ENCODE measurements at regions of chr16 and their contacts with region 1.

Region 1: DNA sequence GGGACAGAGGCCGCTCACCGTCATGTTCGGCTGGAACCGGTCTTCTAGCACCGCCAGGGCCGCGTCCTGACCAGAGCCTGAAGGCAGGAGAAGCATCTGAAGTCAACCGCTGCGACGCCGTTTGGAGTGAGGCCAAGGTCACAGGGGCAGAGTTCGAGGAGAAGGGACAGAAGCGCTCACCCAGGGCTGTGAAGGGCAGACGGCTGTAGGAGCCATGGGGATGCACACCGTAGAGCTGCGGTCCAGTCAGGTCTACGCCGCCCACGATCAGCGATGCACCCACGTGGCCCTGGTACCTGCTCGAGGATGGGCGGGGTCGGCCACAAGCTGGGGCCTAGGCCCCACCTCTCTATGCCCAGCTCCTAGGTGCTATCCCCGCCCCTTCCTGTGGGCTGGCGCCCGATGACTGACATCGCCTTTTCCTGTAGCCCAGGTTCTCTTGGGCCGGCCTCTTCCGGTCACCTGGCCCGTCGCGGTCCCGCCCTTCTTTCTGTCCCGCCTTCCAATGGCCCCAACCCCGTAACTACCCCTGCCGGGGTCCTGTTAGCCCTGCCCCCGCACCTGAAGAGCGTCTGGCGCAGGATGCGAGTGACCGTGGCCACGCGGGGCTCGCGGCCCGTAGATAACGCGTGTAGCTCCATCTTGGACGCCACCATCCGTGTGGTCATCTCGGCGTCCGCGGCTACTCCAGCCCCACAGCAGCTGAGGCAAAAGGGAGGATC is 1.1 kb downstream of the PSMB10 start:
- DNase-seq: peak; percentile 86 to 99 (median 94)
- ATAC-seq: peak; percentile 91
- H3K4me3 ChIP-seq: peak overlapping the region; percentile 96
- H3K4me3 Mint-ChIP-seq: peak overlapping the region; percentile 98
- H3K27ac ChIP-seq: peak overlapping the region; percentile 84 to 89
- H3K27ac Mint-ChIP-seq: peak overlapping the region; percentile 95
- H3K4me1 ChIP-seq: peaks cover 48% of the 10 kb centered on the region
- H3K4me1 Mint-ChIP-seq: peaks cover 38% of the 10 kb centered on the region
- H3K27me3 ChIP-seq: no peaks in the 10 kb centered on the region
- H3K27me3 Mint-ChIP-seq: no peaks in the 10 kb centered on the region
- CTCF ChIP-seq: no peak

Region 2: GRCh38 chr16:67480833-67481560 is 454.6 kb before region 1 on chr16 and contains the start of gene ATP6V0D1:
- CTCF ChIA-PET with region 1: no interaction called
- POLR2A ChIA-PET with region 1: interaction called, 10 read pairs
- intact Hi-C with region 1: no loop called
- DNase-seq: peak; percentile 96 to 100 (median 99)
- ATAC-seq: peak; percentile 87
- H3K4me3 ChIP-seq: peak within 1 kb of the TSS; percentile 100
- H3K4me3 Mint-ChIP-seq: peak within 1 kb of the TSS; percentile 98
- H3K27ac ChIP-seq: peak within 1 kb of the TSS; percentile 98 to 100
- H3K27ac Mint-ChIP-seq: peak within 1 kb of the TSS; percentile 95
- H3K4me1 ChIP-seq: peaks cover 53% of the 10 kb centered on the region
- H3K4me1 Mint-ChIP-seq: peaks cover 54% of the 10 kb centered on the region
- H3K27me3 ChIP-seq: no peaks in the 10 kb centered on the region
- H3K27me3 Mint-ChIP-seq: no peaks in the 10 kb centered on the region
- CTCF ChIP-seq: peak; percentile 81
- total RNA-seq, gene ATP6V0D1: 39.4 to 41.7 TPM

Region 3: DNA sequence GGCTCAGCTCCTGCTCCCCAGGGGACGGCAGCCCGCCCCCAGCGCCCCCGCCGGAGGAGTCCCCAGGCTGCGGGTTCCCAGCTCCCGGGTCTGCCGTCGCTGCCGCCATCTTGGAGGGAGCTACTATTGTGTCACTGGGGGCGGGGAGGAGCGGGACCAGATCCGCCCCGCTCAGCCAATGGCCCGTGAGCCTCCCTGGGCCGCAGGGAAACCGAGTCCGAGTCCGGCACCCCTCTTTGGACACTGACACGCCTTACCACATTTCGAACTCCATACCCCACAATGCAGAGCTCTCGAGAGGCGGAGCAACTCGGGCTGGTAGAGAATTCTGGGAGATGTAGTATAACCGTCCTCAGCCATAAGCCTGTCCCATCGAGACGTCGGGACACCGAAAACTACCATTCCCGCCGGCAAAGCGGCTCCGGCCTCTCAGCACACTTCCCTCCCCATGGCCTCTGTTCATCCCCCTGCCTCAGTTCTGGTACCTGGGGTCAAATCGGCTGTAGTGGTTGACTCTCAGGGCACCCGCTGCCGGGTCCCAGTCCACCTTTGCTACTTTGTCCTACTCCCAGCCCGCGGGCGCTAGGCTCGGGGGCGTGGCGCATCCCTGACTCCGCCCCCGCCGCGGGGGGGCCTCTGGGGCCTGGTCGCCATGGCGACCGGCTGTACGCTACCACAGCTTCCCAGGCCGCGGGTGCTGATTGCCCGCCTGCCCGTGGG is 129.0 kb before region 1 on chr16 and contains the starts of genes RANBP10 and TSNAXIP1:
- CTCF ChIA-PET with region 1: no interaction called
- POLR2A ChIA-PET with region 1: interaction called, 29 read pairs
- intact Hi-C with region 1: no loop called
- DNase-seq: peak; percentile 90 to 99 (median 93)
- ATAC-seq: peak; percentile 92
- H3K4me3 ChIP-seq: peak within 1 kb of the TSS; percentile 97
- H3K4me3 Mint-ChIP-seq: peak within 1 kb of the TSS; percentile 91
- H3K27ac ChIP-seq: peak within 1 kb of the TSS; percentile 69 to 75
- H3K27ac Mint-ChIP-seq: peak within 1 kb of the TSS; percentile 76
- H3K4me1 ChIP-seq: peaks cover 50% of the 10 kb centered on the region
- H3K4me1 Mint-ChIP-seq: peaks cover 43% of the 10 kb centered on the region
- H3K27me3 ChIP-seq: no peaks in the 10 kb centered on the region
- H3K27me3 Mint-ChIP-seq: no peaks in the 10 kb centered on the region
- CTCF ChIP-seq: no peak
- total RNA-seq, gene RANBP10: 12.0 to 13.6 TPM
- total RNA-seq, gene TSNAXIP1: 0.52 to 0.61 TPM

Region 4: DNA sequence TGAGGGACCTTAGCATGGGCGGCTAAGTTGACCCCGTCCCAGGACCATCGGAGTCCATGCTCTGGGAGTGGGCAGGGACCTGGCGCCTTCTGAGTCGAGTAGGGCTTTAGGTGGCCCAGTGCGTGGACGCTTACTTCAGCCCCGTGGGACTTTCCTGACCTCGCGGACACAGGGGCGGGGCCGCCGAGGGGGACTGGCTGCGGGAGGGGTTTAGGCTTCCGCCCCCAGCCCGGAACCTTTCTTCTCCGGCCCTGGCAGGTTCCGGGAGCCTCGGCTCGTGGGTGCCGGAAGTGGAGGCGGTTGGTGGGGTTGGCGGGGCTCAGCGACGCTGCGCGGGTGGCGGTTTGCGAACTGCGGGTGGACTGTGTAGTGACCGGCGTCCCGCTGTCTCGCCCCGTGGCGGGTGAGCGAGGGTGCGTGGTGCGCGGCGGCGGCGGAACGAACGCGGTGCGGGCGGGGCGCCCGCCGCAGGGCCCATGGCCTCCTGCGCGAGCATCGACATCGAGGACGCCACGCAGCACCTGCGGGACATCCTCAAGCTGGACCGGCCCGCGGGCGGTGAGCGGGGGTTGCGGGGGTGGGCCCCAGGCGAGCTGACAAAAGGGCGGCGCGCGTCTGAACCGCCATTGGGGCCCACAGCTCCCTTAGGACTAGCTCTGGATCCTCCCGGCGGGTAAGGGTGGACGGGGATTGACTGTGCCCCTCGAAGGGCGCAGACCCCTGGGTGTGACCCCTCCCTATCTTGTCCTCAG is 62.6 kb before region 1 on chr16 and contains the start of gene EDC4:
- CTCF ChIA-PET with region 1: no interaction called
- POLR2A ChIA-PET with region 1: interaction called, 10 read pairs
- intact Hi-C with region 1: no loop called
- DNase-seq: peak; percentile 77 to 92 (median 84)
- ATAC-seq: peak; percentile 93
- H3K4me3 ChIP-seq: peak within 1 kb of the TSS; percentile 99
- H3K4me3 Mint-ChIP-seq: peak within 1 kb of the TSS; percentile 96
- H3K27ac ChIP-seq: peak within 1 kb of the TSS; percentile 82 to 93
- H3K27ac Mint-ChIP-seq: peak within 1 kb of the TSS; percentile 89
- H3K4me1 ChIP-seq: peaks cover 44% of the 10 kb centered on the region
- H3K4me1 Mint-ChIP-seq: peaks cover 35% of the 10 kb centered on the region
- H3K27me3 ChIP-seq: no peaks in the 10 kb centered on the region
- H3K27me3 Mint-ChIP-seq: no peaks in the 10 kb centered on the region
- CTCF ChIP-seq: no peak
- total RNA-seq, gene EDC4: 134 to 145 TPM

Region 5: DNA sequence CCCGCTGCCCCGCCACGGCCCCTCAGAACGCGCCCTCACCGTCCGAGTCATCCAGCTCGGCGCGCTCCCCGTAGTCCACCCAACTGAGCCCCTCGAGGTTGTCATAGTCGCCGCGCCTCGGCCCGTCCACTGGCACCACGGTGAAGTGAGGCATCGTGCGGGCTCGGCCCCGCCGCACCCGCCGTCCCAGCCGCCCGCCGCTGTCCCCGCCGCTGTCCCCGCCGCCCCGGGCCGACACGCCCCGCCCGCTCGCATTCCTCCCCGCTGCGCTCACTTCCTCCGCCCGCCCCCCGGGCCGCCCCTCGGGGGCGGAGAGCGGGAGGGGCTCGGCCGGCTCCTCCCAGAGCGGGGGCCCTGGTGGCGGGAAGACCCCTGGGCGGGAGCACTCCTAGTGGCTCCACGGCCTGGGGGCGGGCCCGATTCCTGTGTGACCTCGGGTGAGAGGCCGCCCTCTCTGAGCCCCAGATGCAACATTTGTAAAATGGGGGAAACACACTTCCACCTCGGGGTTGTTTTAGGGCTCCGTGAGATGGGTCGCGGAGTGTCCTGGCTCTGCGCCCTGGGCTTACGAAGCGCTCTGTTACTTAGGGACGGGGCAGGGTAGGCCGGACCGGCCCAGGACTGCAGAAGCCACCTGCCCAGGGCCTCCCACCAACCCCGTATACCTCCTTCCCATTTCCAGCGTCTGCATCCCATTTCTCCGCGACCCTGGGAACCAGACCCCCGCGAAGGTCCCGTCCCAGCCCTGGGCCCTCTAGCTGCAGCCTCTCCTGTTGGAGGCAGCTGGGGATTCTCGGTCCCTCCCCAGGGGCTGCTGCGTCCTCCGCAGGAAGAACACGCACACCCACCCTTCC is 33.1 kb after region 1 on chr16 and contains the start of gene SLC12A4:
- CTCF ChIA-PET with region 1: no interaction called
- POLR2A ChIA-PET with region 1: interaction called, 36 read pairs
- intact Hi-C with region 1: loop called (anchors 1 to 2 kb)
- DNase-seq: peak; percentile 61 to 93 (median 79)
- ATAC-seq: peak; percentile 85
- H3K4me3 ChIP-seq: peak within 1 kb of the TSS; percentile 66
- H3K4me3 Mint-ChIP-seq: peak within 1 kb of the TSS; percentile 98
- H3K27ac ChIP-seq: peak within 1 kb of the TSS in 1 of 2 donors; percentile 59
- H3K27ac Mint-ChIP-seq: peak within 1 kb of the TSS; percentile 83
- H3K4me1 ChIP-seq: peaks cover 25% of the 10 kb centered on the region
- H3K4me1 Mint-ChIP-seq: peaks cover 24% of the 10 kb centered on the region
- H3K27me3 ChIP-seq: no peaks in the 10 kb centered on the region
- H3K27me3 Mint-ChIP-seq: no peaks in the 10 kb centered on the region
- CTCF ChIP-seq: no peak
- total RNA-seq, gene SLC12A4: 15.1 to 17.7 TPM

Region 6: GRCh38 chr16:68005786-68006286 is 70.3 kb after region 1 on chr16:
- CTCF ChIA-PET with region 1: no interaction called
- POLR2A ChIA-PET with region 1: interaction called, 44 read pairs
- intact Hi-C with region 1: no loop called
- DNase-seq: peak; percentile 35 to 82 (median 61)
- ATAC-seq: peak; percentile 96
- H3K4me3 ChIP-seq: no peak overlapping the region
- H3K4me3 Mint-ChIP-seq: peak overlapping the region; percentile 74
- H3K27ac ChIP-seq: peak overlapping the region; percentile 62 to 84
- H3K27ac Mint-ChIP-seq: peak overlapping the region; percentile 97
- H3K4me1 ChIP-seq: peaks cover 49% of the 10 kb centered on the region
- H3K4me1 Mint-ChIP-seq: peaks cover 48% of the 10 kb centered on the region
- H3K27me3 ChIP-seq: no peaks in the 10 kb centered on the region
- H3K27me3 Mint-ChIP-seq: no peaks in the 10 kb centered on the region
- CTCF ChIP-seq: no peak

Region 7: DNA sequence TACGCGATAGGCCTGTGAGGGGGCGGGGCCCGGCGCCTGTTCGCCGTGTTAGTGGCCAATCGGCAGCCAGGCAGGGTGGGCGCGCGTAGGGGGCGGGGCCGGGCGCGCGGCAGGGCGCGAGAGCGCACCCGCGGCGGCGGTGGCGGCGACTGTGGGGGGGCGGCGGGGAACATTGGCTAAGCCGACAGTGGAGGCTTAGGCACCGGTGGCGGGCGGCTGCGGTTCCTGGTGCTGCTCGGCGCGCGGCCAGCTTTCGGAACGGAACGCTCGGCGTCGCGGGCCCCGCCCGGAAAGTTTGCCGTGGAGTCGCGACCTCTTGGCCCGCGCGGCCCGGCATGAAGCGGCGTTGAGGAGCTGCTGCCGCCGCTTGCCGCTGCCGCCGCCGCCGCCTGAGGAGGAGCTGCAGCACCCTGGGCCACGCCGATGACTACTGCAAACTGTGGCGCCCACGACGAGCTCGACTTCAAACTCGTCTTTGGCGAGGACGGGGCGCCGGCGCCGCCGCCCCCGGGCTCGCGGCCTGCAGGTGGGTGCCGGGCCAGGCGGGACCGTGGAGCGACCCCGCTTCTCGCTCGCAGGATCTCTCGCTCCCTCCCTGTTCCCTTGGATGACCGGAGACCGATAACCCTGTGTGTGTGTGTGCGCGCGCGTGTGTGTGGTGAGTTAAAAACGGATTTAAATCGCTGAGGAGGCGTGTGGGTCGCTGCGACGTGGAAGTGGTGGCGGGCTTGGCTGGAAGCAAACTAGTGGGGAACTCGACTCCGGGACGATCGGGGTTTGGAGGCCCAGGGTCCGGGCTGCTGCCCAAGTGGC is 149.9 kb after region 1 on chr16 and contains the start of gene NFATC3:
- CTCF ChIA-PET with region 1: no interaction called
- POLR2A ChIA-PET with region 1: interaction called, 29 read pairs
- intact Hi-C with region 1: loop called in 1 of 2 experiments (anchors 2 kb)
- DNase-seq: peak; percentile 97 to 100 (median 99)
- ATAC-seq: peak; percentile 75
- H3K4me3 ChIP-seq: peak within 1 kb of the TSS; percentile 93
- H3K4me3 Mint-ChIP-seq: peak within 1 kb of the TSS; percentile 94
- H3K27ac ChIP-seq: peak within 1 kb of the TSS; percentile 91 to 92
- H3K27ac Mint-ChIP-seq: peak within 1 kb of the TSS; percentile 89
- H3K4me1 ChIP-seq: peaks cover 50% of the 10 kb centered on the region
- H3K4me1 Mint-ChIP-seq: peaks cover 75% of the 10 kb centered on the region
- H3K27me3 ChIP-seq: no peaks in the 10 kb centered on the region
- H3K27me3 Mint-ChIP-seq: no peaks in the 10 kb centered on the region
- CTCF ChIP-seq: no peak
- total RNA-seq, gene NFATC3: 84.8 to 94.4 TPM